HEK293T (cell line): ENCODE measurements at regions of chr17 and their contacts with region 1.

Region 1: DNA sequence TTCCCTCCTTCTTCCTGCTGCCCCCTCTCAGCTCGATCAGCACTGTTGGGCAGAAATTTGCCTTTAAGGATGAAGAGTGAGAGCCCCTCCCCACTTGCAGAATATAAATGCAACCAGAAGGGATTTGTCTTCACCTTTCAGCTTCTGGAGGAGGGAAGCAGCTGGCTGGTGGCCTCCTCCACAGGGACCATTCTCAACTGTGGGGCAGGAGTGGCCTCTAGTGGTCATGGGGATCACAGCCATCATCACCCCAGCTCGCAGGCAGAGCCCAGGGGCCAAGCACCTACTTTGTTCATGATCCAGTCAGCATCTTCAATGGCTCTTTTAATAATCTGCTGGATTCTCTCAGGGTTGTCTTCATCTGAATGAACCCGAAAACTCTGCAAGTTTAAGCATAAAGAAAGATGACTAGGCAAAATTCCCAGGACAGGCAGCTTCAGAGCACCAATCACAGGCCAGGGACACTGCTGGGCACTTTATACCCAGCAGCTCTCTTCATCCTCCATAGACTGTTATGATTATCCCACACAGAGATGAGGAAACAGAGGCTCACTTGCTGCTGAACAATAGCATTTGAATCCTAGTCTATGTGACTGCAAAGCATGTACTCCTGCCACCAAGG is 13.1 kb downstream of the LYRM9 start:
- DNase-seq: peak; percentile 76

Region 2: GRCh38 chr17:27760069-27760885 is 119.8 kb before region 1 on chr17:
- CTCF ChIA-PET with region 1: interaction called, 34 read pairs
- POLR2A ChIA-PET with region 1: interaction called, 7 read pairs
- DNase-seq: peak; percentile 48

Region 3: GRCh38 chr17:27793168-27793905 is 86.8 kb before region 1 on chr17:
- CTCF ChIA-PET with region 1: interaction called, 11 read pairs
- POLR2A ChIA-PET with region 1: interaction called, 3 read pairs
- DNase-seq: peak; percentile 64

Region 4: DNA sequence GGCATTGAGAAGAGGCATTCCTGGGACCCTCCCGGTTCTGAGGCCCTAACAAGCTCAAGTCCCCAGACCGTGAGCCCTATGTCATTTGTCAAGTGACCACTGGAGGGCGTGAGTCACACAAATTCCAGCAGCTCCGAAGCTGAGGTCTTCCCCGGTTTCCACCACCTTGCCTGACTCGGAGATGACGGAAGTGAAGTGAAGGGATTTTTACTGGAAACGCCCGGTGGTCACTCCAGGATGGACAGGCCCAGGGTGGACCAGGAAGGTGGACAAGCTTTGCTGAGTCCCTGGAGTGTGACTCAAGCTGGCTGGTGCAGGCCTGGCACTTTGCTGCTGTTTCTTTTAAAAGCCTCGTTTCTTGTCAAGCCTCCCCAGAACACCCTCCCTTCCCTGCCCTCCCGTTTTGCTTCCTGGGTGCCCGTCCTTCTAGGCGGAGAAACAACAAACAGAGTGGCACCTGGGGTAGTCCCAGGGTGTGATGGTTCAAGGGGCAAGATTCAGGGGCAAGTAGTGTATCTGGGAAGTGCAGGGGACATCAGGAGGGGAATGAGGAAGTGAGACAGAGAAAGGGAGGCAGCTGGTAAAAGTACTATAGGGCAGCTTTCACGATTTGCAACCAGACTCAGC is 74.5 kb before region 1 on chr17:
- CTCF ChIA-PET with region 1: interaction called, 71 read pairs
- POLR2A ChIA-PET with region 1: interaction called, 7 read pairs
- DNase-seq: peak; percentile 80

Region 5: GRCh38 chr17:27892866-27893769 is 13.0 kb after region 1 on chr17 and contains the start of gene LYRM9:
- CTCF ChIA-PET with region 1: interaction called, 22 read pairs
- POLR2A ChIA-PET with region 1: interaction called, 8 read pairs
- DNase-seq: peak; percentile 91

Region 6: GRCh38 chr17:27915709-27916108 is 35.6 kb after region 1 on chr17:
- CTCF ChIA-PET with region 1: no interaction called
- POLR2A ChIA-PET with region 1: no interaction called
- DNase-seq: peak; percentile 45